ENCODE measurements at regions of chr5 and their contacts with region 1.

Region 1: GRCh38 chr5:109739741-109740728 is 50.3 kb downstream of the MAN2A1 start:
- DNase-seq: no peak
- ATAC-seq: peak; percentile 60
- H3K4me3 ChIP-seq: no peak overlapping the region
- H3K27ac ChIP-seq: peak overlapping the region in 1 of 2 donors; percentile 29
- H3K4me1 ChIP-seq: peaks cover 5 to 6% of the 10 kb centered on the region in 2 donors
- H3K27me3 ChIP-seq: no peaks in the 10 kb centered on the region

Region 2: DNA sequence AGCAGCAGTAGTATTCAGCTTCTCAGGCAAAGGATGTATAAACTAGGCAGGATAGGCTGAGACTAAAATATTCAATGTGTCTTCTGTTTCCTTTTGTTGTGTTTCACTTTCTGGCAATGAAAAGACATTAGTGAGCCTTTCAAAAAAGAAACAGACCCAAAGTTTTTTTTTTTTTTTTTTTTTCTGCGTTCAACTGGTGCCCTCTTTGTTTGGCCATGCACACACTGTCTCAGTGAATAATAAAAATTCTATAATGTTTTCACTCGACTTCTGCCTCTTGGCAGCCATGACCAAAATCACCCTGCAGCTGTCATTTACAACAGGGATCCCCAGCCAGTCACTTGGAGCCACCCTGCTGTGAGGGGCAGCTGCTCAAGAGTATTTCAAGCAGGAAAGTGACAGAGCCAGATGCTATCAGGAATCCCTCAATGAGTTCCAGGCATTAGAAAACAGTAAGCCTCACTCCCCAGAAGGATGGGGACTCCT is 94.3 kb before region 1 on chr5:
- intact Hi-C with region 1: loop called in 1 of 2 experiments (anchors 5 kb)
- DNase-seq: no peak
- ATAC-seq: no peak
- H3K4me3 ChIP-seq: no peak overlapping the region
- H3K27ac ChIP-seq: no peak overlapping the region
- H3K4me1 ChIP-seq: peaks cover 0 to 4% of the 10 kb centered on the region in 2 donors
- H3K27me3 ChIP-seq: no peaks in the 10 kb centered on the region

Measured in aorta (tissue), 5 donors.